Tibial artery (tissue), 4 donors: ENCODE measurements at regions of chr3 and their contacts with region 1.

Region 1: GRCh38 chr3:17841190-17841828 is 98.9 kb upstream of the TBC1D5 start:
- DNase-seq: peak; percentile 61 to 78
- H3K4me3 ChIP-seq: no peak overlapping the region
- H3K27ac ChIP-seq: no peak overlapping the region
- H3K4me1 ChIP-seq: no peaks in the 10 kb centered on the region
- H3K27me3 ChIP-seq: no peaks in the 10 kb centered on the region
- CTCF ChIP-seq: peak; percentile 88 to 92

Region 2: DNA sequence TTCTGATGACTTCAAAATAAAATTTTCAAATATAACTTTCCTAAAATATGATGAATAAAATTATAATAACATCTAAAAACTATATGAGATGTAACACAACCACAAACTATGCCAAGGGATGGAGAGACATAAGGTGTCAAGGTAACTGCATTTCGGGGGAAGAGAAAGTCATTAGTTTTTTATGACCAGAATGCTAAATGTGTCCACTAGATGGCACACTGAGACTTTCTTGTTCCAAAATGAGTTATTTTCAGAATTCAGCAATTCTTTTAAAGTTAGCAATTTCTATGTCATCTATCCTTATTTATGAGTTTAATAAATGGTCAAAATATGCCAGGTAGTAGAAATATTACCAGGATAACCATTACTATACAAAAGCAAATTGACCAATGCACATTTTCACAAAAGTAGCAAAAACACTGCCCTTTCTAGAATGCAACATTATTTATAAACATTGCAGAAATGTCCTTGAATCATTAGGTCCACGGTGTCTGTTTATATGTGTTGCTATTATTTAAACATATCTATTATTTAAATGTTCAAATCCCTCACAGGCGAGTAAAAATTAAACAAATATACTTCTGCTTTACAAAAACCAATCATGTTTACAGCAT is 582.4 kb before region 1 on chr3:
- intact Hi-C with region 1: loop called (anchors 5 kb)
- DNase-seq: no peak
- H3K4me3 ChIP-seq: no peak overlapping the region
- H3K27ac ChIP-seq: no peak overlapping the region
- H3K4me1 ChIP-seq: no peaks in the 10 kb centered on the region
- H3K27me3 ChIP-seq: no peaks in the 10 kb centered on the region
- CTCF ChIP-seq: peak; percentile 69 to 73

Region 3: GRCh38 chr3:17431004-17431403 is 410.3 kb before region 1 on chr3:
- intact Hi-C with region 1: loop called (anchors 5 kb)
- DNase-seq: no peak
- H3K4me3 ChIP-seq: no peak overlapping the region
- H3K27ac ChIP-seq: no peak overlapping the region
- H3K4me1 ChIP-seq: peaks cover 0 to 23% (median 9%) of the 10 kb centered on the region in 4 donors
- H3K27me3 ChIP-seq: no peaks in the 10 kb centered on the region
- CTCF ChIP-seq: peak; percentile 55 to 64